ENCODE measurements at regions of chr7 and their contacts with region 1.

Region 1: DNA sequence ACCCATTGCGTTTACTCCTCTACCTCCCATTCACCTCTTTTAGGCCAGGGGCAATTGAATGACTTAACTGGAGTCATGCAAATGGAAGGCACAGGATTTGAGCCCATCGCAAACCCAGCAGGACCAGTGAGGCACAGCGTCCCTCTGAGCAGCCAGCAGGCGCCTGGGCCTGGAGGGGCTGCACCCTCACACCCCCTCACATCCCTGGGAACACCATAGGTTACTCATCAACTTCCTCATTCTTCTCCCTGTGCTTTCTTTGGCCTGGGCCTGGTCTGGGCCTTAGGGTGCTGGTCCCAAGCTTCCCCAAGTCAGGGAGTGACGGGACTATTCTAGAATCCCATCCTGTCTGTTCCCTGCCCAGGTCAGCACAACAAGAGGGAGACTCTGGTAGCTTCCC is 169.4 kb upstream of the EEPD1 start:
- DNase-seq: no peak
- H3K4me3 ChIP-seq: no peak overlapping the region
- CTCF ChIP-seq: no peak
- POLR2A ChIP-seq: no peak

Region 2: GRCh38 chr7:36291387-36292316 is 308.0 kb after region 1 on chr7:
- intact Hi-C with region 1: loop called (anchors 1 kb)
- DNase-seq: peak; percentile 87 to 97
- H3K4me3 ChIP-seq: no peak overlapping the region
- CTCF ChIP-seq: peak in 1 of 3 donors; percentile 92
- POLR2A ChIP-seq: no peak